Calu3 (cell line): ENCODE measurements at regions of chr6 and their contacts with region 1.

Region 1: DNA sequence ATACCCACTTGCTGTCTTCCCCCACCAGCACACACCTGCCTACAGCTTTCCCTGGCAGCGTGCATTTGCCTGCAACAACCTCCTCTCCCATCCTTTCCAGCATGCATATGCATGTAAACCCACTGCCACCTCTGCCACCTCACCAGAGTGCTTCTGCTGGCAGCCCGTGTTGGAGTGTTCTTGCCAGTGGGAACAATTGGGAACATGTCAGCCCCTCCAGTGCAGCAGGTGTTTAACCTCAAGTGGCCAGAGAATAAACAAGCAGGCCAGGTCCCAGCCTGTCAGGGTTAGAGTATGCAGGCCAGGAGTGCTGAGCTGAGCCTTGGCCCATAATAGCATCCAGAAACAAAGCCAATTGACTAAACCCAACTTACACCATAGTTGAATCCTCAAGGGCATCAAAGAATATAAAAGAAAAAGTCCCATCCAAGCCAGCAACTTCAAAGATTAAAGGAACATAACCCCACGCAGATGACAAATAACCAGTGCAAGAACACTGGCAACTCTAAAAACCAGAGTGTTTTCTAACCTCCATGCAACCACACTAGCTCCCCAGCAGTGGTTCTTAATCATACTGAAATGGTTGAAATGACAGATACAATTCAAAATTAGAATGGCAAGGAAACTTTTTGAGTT is 1212.1 kb upstream of the CITED2 start:
- DNase-seq: no peak
- H3K4me3 Mint-ChIP-seq: no peak overlapping the region
- H3K27ac Mint-ChIP-seq: no peak overlapping the region
- H3K4me1 Mint-ChIP-seq: no peaks in the 10 kb centered on the region
- H3K27me3 Mint-ChIP-seq: no peaks in the 10 kb centered on the region
- CTCF ChIP-seq: no peak

Region 2: GRCh38 chr6:140217283-140217682 is 369.3 kb before region 1 on chr6:
- CTCF ChIA-PET with region 1: no interaction called
- intact Hi-C with region 1: loop called (anchors 5 kb)
- DNase-seq: no peak
- H3K4me3 Mint-ChIP-seq: no peak overlapping the region
- H3K27ac Mint-ChIP-seq: no peak overlapping the region
- H3K4me1 Mint-ChIP-seq: no peaks in the 10 kb centered on the region
- H3K27me3 Mint-ChIP-seq: no peaks in the 10 kb centered on the region
- CTCF ChIP-seq: no peak

Region 3: GRCh38 chr6:140623498-140623897 is 37.0 kb after region 1 on chr6:
- CTCF ChIA-PET with region 1: no interaction called
- intact Hi-C with region 1: no loop called
- DNase-seq: no peak
- H3K4me3 Mint-ChIP-seq: no peak overlapping the region
- H3K27ac Mint-ChIP-seq: peak overlapping the region; percentile 91
- H3K4me1 Mint-ChIP-seq: no peaks in the 10 kb centered on the region
- H3K27me3 Mint-ChIP-seq: no peaks in the 10 kb centered on the region
- CTCF ChIP-seq: no peak